B cell (primary cell): ENCODE measurements at regions of chr19 and their contacts with region 1.

Region 1: DNA sequence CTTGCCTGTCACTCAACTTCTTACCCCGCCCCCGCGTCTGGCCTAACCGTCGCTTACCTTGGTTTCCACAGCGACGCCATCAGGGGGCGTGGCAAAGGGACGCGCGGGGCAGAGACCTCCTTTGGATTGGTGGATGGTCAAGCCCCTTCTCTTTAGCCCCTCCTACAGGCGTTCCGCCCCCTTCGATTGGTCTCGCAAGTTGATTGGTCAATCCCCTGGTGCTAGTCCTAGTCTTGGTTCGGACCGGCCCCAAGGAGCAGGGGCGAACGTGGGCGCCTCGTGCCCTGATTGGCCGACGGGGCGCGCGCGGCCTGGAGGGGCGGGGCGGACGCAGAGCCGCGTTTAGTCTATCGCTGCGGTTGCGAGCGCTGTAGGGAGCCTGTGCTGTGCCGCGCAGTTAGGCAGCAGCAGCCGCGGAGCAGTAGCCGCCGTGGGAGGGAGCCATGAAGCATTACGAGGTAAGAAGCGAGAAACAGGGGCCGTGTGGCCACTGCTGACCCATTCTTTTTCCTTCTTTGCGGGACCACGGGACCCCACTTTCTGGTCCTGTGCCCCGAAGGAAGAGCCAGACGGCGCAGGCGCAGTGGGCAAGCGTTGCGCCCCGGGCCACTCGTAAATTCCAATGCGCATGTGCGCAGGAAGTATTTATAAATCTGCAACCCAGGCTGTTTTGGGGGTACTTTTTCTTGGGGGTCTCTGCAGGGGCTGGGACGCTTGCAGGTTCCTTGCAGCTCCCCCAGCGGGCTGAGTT is at the start of gene TECR:
- DNase-seq: peak; percentile 100
- ATAC-seq: peak; percentile 97
- H3K4me3 ChIP-seq: peak within 1 kb of the TSS; percentile 64 to 95 (median 72)
- H3K4me3 Mint-ChIP-seq: peak within 1 kb of the TSS; percentile 91
- H3K27ac ChIP-seq: peak within 1 kb of the TSS; percentile 56 to 86
- H3K27ac Mint-ChIP-seq: peak within 1 kb of the TSS; percentile 95
- H3K4me1 ChIP-seq: peaks cover 13 to 22% of the 10 kb centered on the region in 2 donors
- H3K4me1 Mint-ChIP-seq: peaks cover 29% of the 10 kb centered on the region
- H3K27me3 ChIP-seq: no peaks in the 10 kb centered on the region
- H3K27me3 Mint-ChIP-seq: no peaks in the 10 kb centered on the region
- CTCF ChIP-seq: no peak
- total RNA-seq, gene TECR: 68.9 and 72.4 TPM in 2 replicates

Region 2: DNA sequence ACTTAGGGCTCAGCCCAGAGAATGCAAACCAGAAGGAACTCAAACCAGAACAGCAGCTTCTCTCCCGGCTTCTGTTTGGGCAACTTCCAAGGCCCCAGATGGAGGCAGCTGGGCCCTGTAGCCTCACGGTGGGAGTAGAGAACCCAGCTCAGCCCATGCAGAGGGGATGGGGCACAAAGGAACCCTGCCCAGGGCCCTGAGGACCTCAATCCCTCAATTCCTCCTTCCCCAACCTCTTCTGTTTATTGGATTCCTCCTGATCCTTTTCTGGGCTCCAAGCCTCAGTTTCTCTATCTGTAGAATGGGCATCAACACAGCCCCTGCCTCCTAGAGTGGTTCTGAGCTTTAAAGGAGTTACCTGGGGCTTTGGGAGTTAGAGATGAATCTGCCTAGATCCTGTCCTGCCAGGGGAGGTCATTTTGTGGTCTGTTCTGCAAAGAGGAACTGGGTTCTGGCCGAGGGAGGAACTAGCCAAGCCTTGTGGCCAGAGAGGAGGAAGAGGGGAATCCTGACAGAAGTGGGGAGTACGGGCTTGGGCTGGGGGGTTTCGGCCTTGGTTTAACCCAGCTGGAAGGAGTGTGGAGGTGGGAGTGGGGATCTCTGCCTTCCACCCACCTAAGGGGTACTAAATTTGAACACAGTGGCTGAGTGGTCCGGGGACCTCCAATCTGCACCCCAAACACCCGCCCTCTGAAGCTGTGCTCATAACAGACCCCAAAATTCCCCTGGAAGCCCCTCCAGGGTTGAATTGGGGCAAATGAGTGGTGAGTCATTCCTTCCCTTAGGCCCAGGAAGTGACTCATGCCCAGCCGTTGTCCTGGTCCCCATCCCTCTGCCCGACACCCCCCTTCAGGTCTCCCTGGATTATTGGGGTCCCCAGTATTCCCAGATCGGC is 145.5 kb before region 1 on chr19:
- CTCF ChIA-PET with region 1: no interaction called
- POLR2A ChIA-PET with region 1: no interaction called
- intact Hi-C with region 1: no loop called
- DNase-seq: peak; percentile 68
- ATAC-seq: peak; percentile 12
- H3K4me3 ChIP-seq: peak overlapping the region; percentile 19 to 90 (median 39)
- H3K4me3 Mint-ChIP-seq: peak overlapping the region; percentile 85
- H3K27ac ChIP-seq: peak overlapping the region; percentile 97 to 99
- H3K27ac Mint-ChIP-seq: peak overlapping the region; percentile 89
- H3K4me1 ChIP-seq: peaks cover 48 to 70% of the 10 kb centered on the region in 2 donors
- H3K4me1 Mint-ChIP-seq: peaks cover 51% of the 10 kb centered on the region
- H3K27me3 ChIP-seq: no peaks in the 10 kb centered on the region
- H3K27me3 Mint-ChIP-seq: no peaks in the 10 kb centered on the region
- CTCF ChIP-seq: no peak

Region 3: DNA sequence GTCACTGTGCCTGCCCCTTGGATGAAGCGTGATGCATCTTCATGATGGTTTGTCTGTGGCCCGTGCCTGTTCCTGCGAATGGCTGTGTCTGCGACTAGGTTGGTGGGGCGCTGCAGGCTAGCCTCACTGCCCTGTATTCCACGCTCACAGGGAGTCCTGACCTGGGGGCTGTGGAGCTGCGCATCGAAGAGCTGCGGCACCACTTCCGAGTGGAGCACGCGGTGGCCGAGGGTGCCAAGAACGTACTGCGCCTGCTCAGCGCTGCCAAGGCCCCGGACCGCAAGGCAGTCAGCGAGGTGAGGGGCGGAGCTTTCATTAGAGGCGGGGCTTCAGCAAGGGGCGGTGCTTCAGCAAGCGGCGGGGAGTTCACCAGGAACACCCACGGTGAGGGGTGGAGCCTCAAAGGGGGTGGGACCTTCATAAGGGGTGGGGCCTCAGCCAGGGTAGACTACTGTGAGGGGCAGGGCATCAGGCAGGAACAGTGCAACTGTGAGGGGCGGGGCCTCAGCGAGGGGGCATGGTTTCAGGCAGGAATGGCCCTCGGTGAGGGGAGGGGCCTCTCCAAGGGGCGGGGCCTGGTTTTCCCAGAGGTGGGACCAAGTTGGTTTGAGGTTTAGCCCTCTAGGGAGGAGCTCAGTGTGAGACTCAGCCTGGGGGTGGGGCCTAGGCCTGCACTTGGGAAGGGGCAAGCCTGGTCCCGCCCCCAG is 79.1 kb before region 1 on chr19:
- CTCF ChIA-PET with region 1: no interaction called
- POLR2A ChIA-PET with region 1: interaction called, 12 read pairs
- intact Hi-C with region 1: no loop called
- DNase-seq: peak; percentile 53
- ATAC-seq: peak; percentile 64
- H3K4me3 ChIP-seq: no peak overlapping the region
- H3K4me3 Mint-ChIP-seq: no peak overlapping the region
- H3K27ac ChIP-seq: no peak overlapping the region
- H3K27ac Mint-ChIP-seq: no peak overlapping the region
- H3K4me1 ChIP-seq: no peaks in the 10 kb centered on the region
- H3K4me1 Mint-ChIP-seq: peaks cover 3% of the 10 kb centered on the region
- H3K27me3 ChIP-seq: no peaks in the 10 kb centered on the region
- H3K27me3 Mint-ChIP-seq: no peaks in the 10 kb centered on the region
- CTCF ChIP-seq: no peak

Region 4: GRCh38 chr19:14505488-14506432 is 23.7 kb before region 1 on chr19:
- CTCF ChIA-PET with region 1: interaction called, 8 read pairs
- POLR2A ChIA-PET with region 1: no interaction called
- intact Hi-C with region 1: loop called (anchors 1 kb)
- DNase-seq: peak; percentile 70
- ATAC-seq: peak; percentile 81
- H3K4me3 ChIP-seq: no peak overlapping the region
- H3K4me3 Mint-ChIP-seq: no peak overlapping the region
- H3K27ac ChIP-seq: no peak overlapping the region
- H3K27ac Mint-ChIP-seq: peak overlapping the region; percentile 1
- H3K4me1 ChIP-seq: no peaks in the 10 kb centered on the region
- H3K4me1 Mint-ChIP-seq: peaks cover 3% of the 10 kb centered on the region
- H3K27me3 ChIP-seq: peaks cover 0 to 4% (median 0%) of the 10 kb centered on the region in 4 experiments
- H3K27me3 Mint-ChIP-seq: peaks cover 14% of the 10 kb centered on the region
- CTCF ChIP-seq: peak; percentile 78

Region 5: GRCh38 chr19:14517840-14518505 is 11.5 kb before region 1 on chr19 and contains the start of gene DNAJB1:
- CTCF ChIA-PET with region 1: interaction called, 3 read pairs
- POLR2A ChIA-PET with region 1: interaction called, 13 read pairs
- intact Hi-C with region 1: loop called (anchors 1 kb)
- DNase-seq: no peak
- ATAC-seq: peak; percentile 52
- H3K4me3 ChIP-seq: peak within 1 kb of the TSS; percentile 88 to 98 (median 94)
- H3K4me3 Mint-ChIP-seq: peak within 1 kb of the TSS; percentile 96
- H3K27ac ChIP-seq: peak within 1 kb of the TSS; percentile 93 to 95
- H3K27ac Mint-ChIP-seq: peak within 1 kb of the TSS; percentile 99
- H3K4me1 ChIP-seq: peaks cover 44 to 48% of the 10 kb centered on the region in 2 donors
- H3K4me1 Mint-ChIP-seq: peaks cover 55% of the 10 kb centered on the region
- H3K27me3 ChIP-seq: no peaks in the 10 kb centered on the region
- H3K27me3 Mint-ChIP-seq: no peaks in the 10 kb centered on the region
- CTCF ChIP-seq: no peak
- total RNA-seq, gene DNAJB1: 72.8 and 82.1 TPM in 2 replicates

Region 6: GRCh38 chr19:14556662-14557188 is 27.3 kb after region 1 on chr19:
- CTCF ChIA-PET with region 1: interaction called, 14 read pairs
- POLR2A ChIA-PET with region 1: no interaction called
- intact Hi-C with region 1: no loop called
- DNase-seq: peak; percentile 80
- ATAC-seq: peak; percentile 82
- H3K4me3 ChIP-seq: no peak overlapping the region
- H3K4me3 Mint-ChIP-seq: peak overlapping the region; percentile 41
- H3K27ac ChIP-seq: no peak overlapping the region
- H3K27ac Mint-ChIP-seq: no peak overlapping the region
- H3K4me1 ChIP-seq: peaks cover 4 to 19% of the 10 kb centered on the region in 2 donors
- H3K4me1 Mint-ChIP-seq: peaks cover 30% of the 10 kb centered on the region
- H3K27me3 ChIP-seq: no peaks in the 10 kb centered on the region
- H3K27me3 Mint-ChIP-seq: no peaks in the 10 kb centered on the region
- CTCF ChIP-seq: peak; percentile 92

Region 7: DNA sequence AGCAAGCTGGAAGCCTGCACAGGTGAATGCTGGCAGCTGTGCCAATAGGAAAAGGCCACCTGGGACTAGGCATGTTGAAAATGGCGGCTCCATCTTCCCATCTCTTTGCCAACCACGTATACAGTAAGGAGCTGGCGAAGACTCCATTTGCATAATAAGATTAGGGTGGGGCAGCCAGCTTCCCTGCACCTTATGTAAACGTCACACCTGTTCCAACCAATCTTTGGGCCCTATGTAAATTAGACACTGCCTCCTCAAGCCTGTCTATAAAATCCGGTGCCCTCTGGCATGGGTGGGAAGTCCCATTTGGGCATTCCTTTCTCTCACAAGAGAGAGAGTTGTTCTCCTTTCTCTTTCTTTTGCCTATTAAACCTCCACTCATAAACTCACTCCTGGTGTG is 232.2 kb after region 1 on chr19:
- CTCF ChIA-PET with region 1: no interaction called
- POLR2A ChIA-PET with region 1: no interaction called
- intact Hi-C with region 1: no loop called
- DNase-seq: no peak
- ATAC-seq: no peak
- H3K4me3 ChIP-seq: no peak overlapping the region
- H3K4me3 Mint-ChIP-seq: no peak overlapping the region
- H3K27ac ChIP-seq: no peak overlapping the region
- H3K27ac Mint-ChIP-seq: no peak overlapping the region
- H3K4me1 ChIP-seq: no peaks in the 10 kb centered on the region
- H3K4me1 Mint-ChIP-seq: no peaks in the 10 kb centered on the region
- H3K27me3 ChIP-seq: no peaks in the 10 kb centered on the region
- H3K27me3 Mint-ChIP-seq: peaks cover 14% of the 10 kb centered on the region
- CTCF ChIP-seq: no peak